ENCODE measurements at regions of chr14 and their contacts with region 1.

Region 1: GRCh38 chr14:103808403-103809001 is 38.9 kb downstream of the PPP1R13B start:
- DNase-seq: peak; percentile 77 to 88 (median 84)
- H3K4me3 ChIP-seq: no peak overlapping the region
- H3K27ac ChIP-seq: no peak overlapping the region
- H3K4me1 ChIP-seq: peaks cover 2% of the 10 kb centered on the region
- H3K27me3 ChIP-seq: no peaks in the 10 kb centered on the region
- CTCF ChIP-seq: peak; percentile 66 to 84 (median 83)
- EP300 ChIP-seq: no peak
- POLR2A ChIP-seq: peak; percentile 11

Region 2: DNA sequence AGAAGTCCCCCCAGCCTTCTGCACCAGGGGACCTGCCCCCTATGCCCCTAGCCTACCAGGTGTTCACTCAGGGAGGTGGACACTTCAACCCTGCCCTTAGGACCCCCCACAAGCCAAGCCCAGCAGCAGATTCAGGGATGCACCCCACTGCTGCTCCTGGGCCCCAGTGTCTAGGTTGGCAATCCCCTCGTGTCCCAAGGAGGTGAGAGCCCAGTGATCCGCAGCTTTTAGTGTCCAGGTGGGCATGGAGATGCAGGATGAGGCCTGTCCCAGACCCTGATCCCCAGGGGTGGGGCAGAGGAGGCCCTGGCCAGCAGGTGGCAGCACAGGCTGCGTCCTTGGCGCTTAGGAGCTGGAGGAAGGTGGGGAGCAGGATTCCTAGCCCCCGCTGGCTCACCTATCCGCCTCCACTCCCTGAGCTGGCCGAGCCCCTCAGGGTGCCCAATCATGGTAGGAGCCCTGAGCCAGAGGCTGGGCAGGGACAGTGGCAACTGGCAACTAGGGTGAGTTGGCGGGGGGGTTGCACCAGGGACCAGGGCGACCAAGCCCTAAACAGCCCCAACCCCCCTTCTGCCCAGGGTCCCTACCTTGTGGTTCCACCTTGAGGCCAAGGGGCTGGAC is 290.0 kb before region 1 on chr14:
- intact Hi-C with region 1: no loop called
- DNase-seq: peak; percentile 68 to 85 (median 80)
- H3K4me3 ChIP-seq: no peak overlapping the region
- H3K27ac ChIP-seq: peak overlapping the region; percentile 58 to 63
- H3K4me1 ChIP-seq: peaks cover 10% of the 10 kb centered on the region
- H3K27me3 ChIP-seq: no peaks in the 10 kb centered on the region
- CTCF ChIP-seq: peak; percentile 57 to 93 (median 85)
- EP300 ChIP-seq: no peak
- POLR2A ChIP-seq: peak; percentile 24

Region 3: GRCh38 chr14:103889313-103890051 is 81.0 kb after region 1 on chr14:
- intact Hi-C with region 1: loop called in 2 of 4 experiments (anchors 10 kb)
- DNase-seq: peak in 1 of 5 donors; percentile 57
- H3K4me3 ChIP-seq: no peak overlapping the region
- H3K27ac ChIP-seq: no peak overlapping the region
- H3K4me1 ChIP-seq: peaks cover 11% of the 10 kb centered on the region
- H3K27me3 ChIP-seq: no peaks in the 10 kb centered on the region
- CTCF ChIP-seq: no peak
- EP300 ChIP-seq: no peak
- POLR2A ChIP-seq: no peak

Region 4: DNA sequence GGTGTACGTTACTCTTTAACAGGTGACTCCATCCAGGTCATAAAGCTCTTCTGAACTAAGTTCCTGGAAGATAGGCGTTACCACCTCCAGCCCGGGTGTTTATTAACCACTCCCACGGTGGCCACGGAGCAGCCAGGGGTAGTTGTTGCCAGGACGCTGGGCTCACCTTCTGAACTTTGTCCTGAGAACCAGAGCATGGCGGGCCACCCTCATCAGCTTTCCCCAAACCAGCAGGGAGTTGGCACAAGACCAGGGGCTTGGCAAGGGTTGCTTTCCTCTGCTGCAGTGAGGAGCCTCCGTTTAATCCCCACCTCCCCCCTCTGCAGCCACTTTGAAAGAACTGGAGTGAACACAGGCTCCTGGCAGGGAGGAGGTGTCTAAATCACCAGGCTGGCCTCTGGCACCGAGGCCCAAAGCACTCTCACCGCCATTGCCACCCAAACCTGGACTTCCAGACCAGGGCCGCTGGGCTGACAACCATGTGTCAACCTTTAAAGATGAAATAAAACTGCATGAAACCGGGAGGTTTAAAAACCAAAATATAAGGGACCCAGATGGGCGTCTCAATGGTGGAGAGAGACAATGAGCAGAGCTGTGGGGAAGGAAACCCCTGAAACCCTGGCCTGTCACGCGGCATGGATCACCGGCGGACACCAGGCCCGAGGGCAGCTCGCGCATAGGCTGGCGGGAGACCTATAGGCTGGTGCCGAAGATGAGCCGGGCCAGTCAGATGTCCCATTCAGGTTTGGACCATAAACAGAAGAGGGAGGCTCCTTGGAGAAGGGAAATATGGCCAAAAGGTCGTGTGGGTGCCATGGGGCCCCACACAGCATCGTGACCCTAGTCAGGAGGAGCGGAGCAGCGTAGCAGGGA is 88.8 kb after region 1 on chr14:
- intact Hi-C with region 1: loop called in 3 of 4 experiments (anchors 5 to 10 kb)
- DNase-seq: no peak
- H3K4me3 ChIP-seq: no peak overlapping the region
- H3K27ac ChIP-seq: no peak overlapping the region
- H3K4me1 ChIP-seq: no peaks in the 10 kb centered on the region
- H3K27me3 ChIP-seq: no peaks in the 10 kb centered on the region
- CTCF ChIP-seq: no peak
- EP300 ChIP-seq: no peak
- POLR2A ChIP-seq: no peak

Region 5: DNA sequence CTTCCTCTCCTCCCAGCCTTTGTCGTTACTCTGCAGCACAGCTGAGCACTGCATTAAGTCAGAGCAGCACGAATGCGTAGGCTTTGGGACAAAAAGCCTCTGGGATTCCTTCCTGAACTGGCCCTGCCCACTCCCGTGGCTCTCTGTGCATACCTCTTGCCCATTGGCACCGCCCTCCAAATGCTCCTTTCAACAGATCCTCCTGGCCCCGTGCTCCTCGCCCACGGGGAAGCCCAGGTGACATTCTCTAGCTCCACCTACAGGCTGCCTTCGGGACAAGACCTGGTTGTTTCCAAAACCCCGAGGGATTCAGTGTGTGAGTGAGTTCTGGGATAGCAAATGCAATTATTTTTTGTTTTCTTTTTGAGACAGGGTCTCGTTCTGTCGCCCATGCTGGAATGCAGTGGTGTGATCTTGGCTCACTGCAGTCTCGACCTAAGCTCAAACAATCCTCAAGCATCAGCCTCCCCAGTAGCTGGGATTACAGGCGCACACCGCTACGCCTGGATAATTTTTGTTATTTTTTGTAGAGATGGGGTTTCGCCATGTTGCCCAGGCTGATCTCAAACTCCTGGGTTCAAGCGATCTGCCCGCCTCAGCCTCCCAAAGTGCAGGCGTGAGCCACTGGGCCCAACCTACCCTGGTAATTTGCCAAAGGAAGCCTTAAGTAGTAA is 101.9 kb after region 1 on chr14:
- intact Hi-C with region 1: loop called (anchors 2 to 5 kb)
- DNase-seq: peak; percentile 75 to 82 (median 81)
- H3K4me3 ChIP-seq: no peak overlapping the region
- H3K27ac ChIP-seq: no peak overlapping the region
- H3K4me1 ChIP-seq: no peaks in the 10 kb centered on the region
- H3K27me3 ChIP-seq: no peaks in the 10 kb centered on the region
- CTCF ChIP-seq: peak; percentile 63 to 85 (median 74)
- EP300 ChIP-seq: no peak
- POLR2A ChIP-seq: no peak

Measured in ovary (tissue), 10 donors.